PC-3 (cell line): ENCODE measurements at regions of chr21 and their contacts with region 1.

Region 1: GRCh38 chr21:15729674-15730483 is at the start of gene USP25:
- DNase-seq: peak; percentile 94
- ATAC-seq: peak; percentile 77
- H3K4me3 ChIP-seq: peak within 1 kb of the TSS; percentile 85
- H3K27ac ChIP-seq: peak within 1 kb of the TSS; percentile 58
- H3K4me1 ChIP-seq: peaks cover 17% of the 10 kb centered on the region
- H3K27me3 ChIP-seq: no peaks in the 10 kb centered on the region
- CTCF ChIP-seq: no peak
- total RNA-seq, gene USP25: 28.3 and 54.4 TPM in 2 replicates

Region 2: GRCh38 chr21:14382835-14383594 is 1346.9 kb before region 1 on chr21 and contains the start of gene HSPA13:
- CTCF ChIA-PET with region 1: no interaction called
- POLR2A ChIA-PET with region 1: no interaction called
- intact Hi-C with region 1: loop called (anchors 5 kb)
- DNase-seq: peak; percentile 99
- ATAC-seq: peak; percentile 98
- H3K4me3 ChIP-seq: peak within 1 kb of the TSS; percentile 87
- H3K27ac ChIP-seq: no peak within 1 kb of the TSS; the same call in 1 of the 2 replicates
- H3K4me1 ChIP-seq: peaks cover 20% of the 10 kb centered on the region
- H3K27me3 ChIP-seq: no peaks in the 10 kb centered on the region
- CTCF ChIP-seq: no peak
- total RNA-seq, gene HSPA13: 18.1 and 25.1 TPM in 2 replicates

Region 3: DNA sequence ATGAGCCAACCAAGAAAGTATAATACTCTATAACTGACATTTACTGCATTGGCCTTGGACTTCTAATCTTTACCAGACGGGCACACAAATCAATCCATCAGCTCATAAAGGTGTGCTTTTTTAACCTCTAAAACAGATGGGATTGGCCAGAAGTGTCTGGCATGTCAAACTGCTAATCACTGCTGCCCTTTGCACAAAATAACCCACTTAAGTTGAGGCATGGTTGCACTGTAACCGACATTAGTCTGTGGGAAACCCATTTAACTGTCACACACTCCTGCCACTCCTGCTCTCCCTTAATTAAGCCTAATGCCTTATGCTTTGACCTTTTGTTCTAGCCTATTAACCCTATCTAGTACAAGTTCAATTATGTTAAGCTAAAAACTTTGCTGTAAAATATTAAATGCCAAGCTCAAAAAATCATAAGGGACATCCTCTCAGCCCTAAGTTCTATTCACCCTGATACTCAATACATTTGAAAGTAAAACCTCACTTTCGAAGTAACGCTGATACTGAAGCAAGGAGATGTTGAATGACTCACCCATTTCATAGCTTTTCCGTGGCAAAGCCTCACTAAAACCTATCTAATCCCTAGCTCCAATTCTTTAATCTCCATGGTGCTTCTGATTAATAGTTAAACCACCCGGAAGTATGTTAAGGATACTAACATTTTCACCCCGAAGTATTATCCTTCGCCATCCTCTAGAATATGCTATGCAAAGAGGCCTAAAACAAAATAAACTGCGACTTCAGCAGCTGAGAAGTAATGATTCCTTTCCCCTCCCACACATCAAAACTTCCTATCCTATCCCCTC is 678.0 kb before region 1 on chr21:
- CTCF ChIA-PET with region 1: no interaction called
- POLR2A ChIA-PET with region 1: no interaction called
- intact Hi-C with region 1: loop called (anchors 10 kb)
- DNase-seq: peak; percentile 61
- ATAC-seq: peak; percentile 43
- H3K4me3 ChIP-seq: peak overlapping the region; percentile 59
- H3K27ac ChIP-seq: peak overlapping the region; percentile 36
- H3K4me1 ChIP-seq: peaks cover 58% of the 10 kb centered on the region
- H3K27me3 ChIP-seq: no peaks in the 10 kb centered on the region
- CTCF ChIP-seq: no peak

Region 4: GRCh38 chr21:15390049-15390448 is 339.8 kb before region 1 on chr21:
- CTCF ChIA-PET with region 1: no interaction called
- POLR2A ChIA-PET with region 1: no interaction called
- intact Hi-C with region 1: no loop called
- DNase-seq: no peak
- ATAC-seq: no peak
- H3K4me3 ChIP-seq: no peak overlapping the region
- H3K27ac ChIP-seq: no peak overlapping the region
- H3K4me1 ChIP-seq: no peaks in the 10 kb centered on the region
- H3K27me3 ChIP-seq: no peaks in the 10 kb centered on the region
- CTCF ChIP-seq: no peak

Region 5: GRCh38 chr21:15667010-15667409 is 62.9 kb before region 1 on chr21:
- CTCF ChIA-PET with region 1: no interaction called
- POLR2A ChIA-PET with region 1: no interaction called
- intact Hi-C with region 1: loop called (anchors 2 kb)
- DNase-seq: peak; percentile 93
- ATAC-seq: peak; percentile 95
- H3K4me3 ChIP-seq: no peak overlapping the region
- H3K27ac ChIP-seq: peak overlapping the region; percentile 7
- H3K4me1 ChIP-seq: peaks cover 17% of the 10 kb centered on the region
- H3K27me3 ChIP-seq: no peaks in the 10 kb centered on the region
- CTCF ChIP-seq: no peak

Region 6: GRCh38 chr21:15682186-15682895 is 47.5 kb before region 1 on chr21:
- CTCF ChIA-PET with region 1: no interaction called
- POLR2A ChIA-PET with region 1: no interaction called
- intact Hi-C with region 1: loop called (anchors 2 kb)
- DNase-seq: peak; percentile 80
- ATAC-seq: peak; percentile 58
- H3K4me3 ChIP-seq: peak overlapping the region; percentile 8; the same call in 1 of the 2 replicates
- H3K27ac ChIP-seq: peak overlapping the region; percentile 83
- H3K4me1 ChIP-seq: peaks cover 37% of the 10 kb centered on the region
- H3K27me3 ChIP-seq: no peaks in the 10 kb centered on the region
- CTCF ChIP-seq: no peak

Region 7: DNA sequence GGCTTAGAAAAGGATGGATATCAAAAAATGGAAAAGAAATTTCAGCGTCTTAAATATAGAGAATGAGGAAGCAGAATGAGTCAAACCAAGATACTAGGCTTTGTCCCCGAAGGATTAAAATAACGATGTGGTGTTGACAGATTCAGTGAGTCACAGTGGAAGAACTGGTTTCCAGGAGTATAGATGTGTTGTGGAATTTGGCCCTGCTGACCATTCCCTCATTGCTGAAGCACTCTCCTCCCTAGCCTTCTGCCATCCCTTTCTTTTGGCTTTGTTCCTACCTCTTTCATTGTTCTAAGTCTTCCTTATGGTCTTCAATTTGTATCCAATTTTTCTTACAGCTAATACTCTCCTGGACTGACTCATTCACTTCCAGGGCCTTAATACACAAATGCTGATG is 23.2 kb before region 1 on chr21:
- CTCF ChIA-PET with region 1: no interaction called
- POLR2A ChIA-PET with region 1: interaction called, 4 read pairs
- intact Hi-C with region 1: loop called (anchors 1 kb)
- DNase-seq: peak; percentile 99
- ATAC-seq: peak; percentile 100
- H3K4me3 ChIP-seq: no peak overlapping the region
- H3K27ac ChIP-seq: peak overlapping the region; percentile 78
- H3K4me1 ChIP-seq: peaks cover 12% of the 10 kb centered on the region
- H3K27me3 ChIP-seq: no peaks in the 10 kb centered on the region
- CTCF ChIP-seq: no peak

Region 8: DNA sequence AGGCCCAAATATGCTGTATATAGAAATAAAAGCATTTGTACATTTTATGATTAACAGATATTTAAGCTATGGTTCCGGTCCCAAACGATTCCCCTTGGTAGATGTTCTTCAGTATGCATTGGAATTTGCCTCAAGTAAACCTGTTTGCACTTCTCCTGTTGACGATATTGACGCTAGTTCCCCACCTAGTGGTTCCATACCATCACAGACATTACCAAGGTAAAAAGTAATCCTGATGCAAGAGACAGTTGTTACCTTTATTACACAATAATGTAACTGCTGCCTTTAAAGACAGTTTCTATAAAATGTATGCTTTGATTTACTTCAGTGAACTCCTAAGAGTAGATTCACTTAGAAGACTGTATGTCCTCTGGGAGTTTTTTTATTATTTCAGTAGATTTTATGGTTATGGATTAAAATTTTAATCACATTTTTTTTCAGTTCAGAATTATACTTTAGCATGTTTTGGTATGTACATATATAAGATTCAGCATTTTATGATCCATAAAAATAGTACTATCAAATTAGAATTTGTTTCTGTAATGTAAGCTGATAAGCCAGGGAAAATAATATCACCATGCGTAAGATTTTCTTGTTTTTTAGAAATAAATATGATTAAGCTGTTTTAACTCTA is 96.4 kb after region 1 on chr21:
- CTCF ChIA-PET with region 1: no interaction called
- POLR2A ChIA-PET with region 1: no interaction called
- intact Hi-C with region 1: loop called (anchors 1 kb)
- DNase-seq: peak; percentile 84
- ATAC-seq: peak; percentile 94
- H3K4me3 ChIP-seq: no peak overlapping the region
- H3K27ac ChIP-seq: no peak overlapping the region
- H3K4me1 ChIP-seq: 0 out of 2 replicates have a peak, but pooled peaks cover 2% of the 10 kb centered on the region
- H3K27me3 ChIP-seq: no peaks in the 10 kb centered on the region
- CTCF ChIP-seq: peak; percentile 92